ENCODE measurements at regions of chr17 and their contacts with region 1.

Region 1: GRCh38 chr17:48351831-48352332 is 78.1 kb downstream of the SKAP1 start:
- DNase-seq: no peak
- ATAC-seq: peak; percentile 27; the same call in 2 of the 3 replicates
- H3K4me3 ChIP-seq: no peak overlapping the region
- H3K27ac ChIP-seq: no peak overlapping the region
- H3K4me1 ChIP-seq: no peaks in the 10 kb centered on the region
- H3K27me3 ChIP-seq: no peaks in the 10 kb centered on the region
- CTCF ChIP-seq: peak; percentile 39 to 66 (median 53); a peak in 5 of 6 replicates
- EP300 ChIP-seq: no peak
- POLR2A ChIP-seq: no peak
- RAD21 ChIP-seq: peak; percentile 86

Region 2: GRCh38 chr17:48330386-48330785 is 21.5 kb before region 1 on chr17:
- CTCF ChIA-PET with region 1: interaction called, 67 read pairs
- POLR2A ChIA-PET with region 1: interaction called, 3 read pairs
- RAD21 ChIA-PET with region 1: interaction called, 35 read pairs
- SMC1A ChIA-PET with region 1: interaction called, 40 read pairs
- in situ Hi-C with region 1: no loop called
- intact Hi-C with region 1: no loop called
- DNase-seq: no peak
- ATAC-seq: no peak
- H3K4me3 ChIP-seq: no peak overlapping the region
- H3K27ac ChIP-seq: no peak overlapping the region
- H3K4me1 ChIP-seq: peaks cover 10% of the 10 kb centered on the region; the same call in 1 of the 2 replicates
- H3K27me3 ChIP-seq: no peaks in the 10 kb centered on the region
- CTCF ChIP-seq: no peak
- EP300 ChIP-seq: no peak
- POLR2A ChIP-seq: no peak
- RAD21 ChIP-seq: no peak

Region 3: GRCh38 chr17:48368352-48368908 is 16.5 kb after region 1 on chr17:
- CTCF ChIA-PET with region 1: interaction called, 36 read pairs
- POLR2A ChIA-PET with region 1: interaction called, 3 read pairs
- RAD21 ChIA-PET with region 1: interaction called, 5 read pairs
- SMC1A ChIA-PET with region 1: interaction called, 18 read pairs
- in situ Hi-C with region 1: no loop called
- intact Hi-C with region 1: no loop called
- DNase-seq: no peak
- ATAC-seq: no peak
- H3K4me3 ChIP-seq: no peak overlapping the region
- H3K27ac ChIP-seq: no peak overlapping the region
- H3K4me1 ChIP-seq: no peaks in the 10 kb centered on the region
- H3K27me3 ChIP-seq: no peaks in the 10 kb centered on the region
- CTCF ChIP-seq: no peak
- EP300 ChIP-seq: no peak
- POLR2A ChIP-seq: no peak
- RAD21 ChIP-seq: no peak

Region 4: DNA sequence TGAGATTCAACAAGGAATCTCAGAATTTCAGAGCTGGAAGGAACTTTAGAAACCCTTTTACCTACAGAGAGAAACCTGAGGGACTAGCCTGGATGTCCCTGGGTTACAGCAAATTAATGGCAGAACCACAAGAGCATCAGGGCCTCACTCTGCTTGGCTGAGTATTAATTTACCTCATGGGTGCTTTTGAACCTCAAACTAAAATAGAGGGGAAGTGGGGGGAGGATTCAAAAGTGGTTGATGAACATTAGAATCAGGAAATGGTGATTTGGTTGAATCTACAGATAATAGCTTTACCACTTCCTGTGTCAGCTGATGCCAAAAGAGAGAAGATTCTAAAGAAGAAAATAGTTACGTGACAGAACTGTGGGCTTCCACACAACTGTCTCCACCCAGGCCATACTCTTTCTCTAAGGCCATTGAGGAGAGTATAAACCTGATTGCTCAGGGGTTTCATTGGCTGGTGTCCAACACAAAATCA is 89.4 kb after region 1 on chr17:
- CTCF ChIA-PET with region 1: interaction called, 22 read pairs
- POLR2A ChIA-PET with region 1: no interaction called
- RAD21 ChIA-PET with region 1: interaction called, 28 read pairs
- SMC1A ChIA-PET with region 1: interaction called, 24 read pairs
- in situ Hi-C with region 1: no loop called
- intact Hi-C with region 1: no loop called
- DNase-seq: peak; percentile 96
- ATAC-seq: peak; percentile 86
- H3K4me3 ChIP-seq: peak overlapping the region; percentile 25; the same call in 1 of the 2 replicates
- H3K27ac ChIP-seq: peak overlapping the region; percentile 94
- H3K4me1 ChIP-seq: peaks cover 64% of the 10 kb centered on the region
- H3K27me3 ChIP-seq: no peaks in the 10 kb centered on the region
- CTCF ChIP-seq: no peak
- EP300 ChIP-seq: peak; percentile 85 to 91
- POLR2A ChIP-seq: no peak; the same call in 1 of the 2 replicates
- RAD21 ChIP-seq: 0 out of 2 replicates have a peak, but pooled peaks have one; percentile 1

Region 5: DNA sequence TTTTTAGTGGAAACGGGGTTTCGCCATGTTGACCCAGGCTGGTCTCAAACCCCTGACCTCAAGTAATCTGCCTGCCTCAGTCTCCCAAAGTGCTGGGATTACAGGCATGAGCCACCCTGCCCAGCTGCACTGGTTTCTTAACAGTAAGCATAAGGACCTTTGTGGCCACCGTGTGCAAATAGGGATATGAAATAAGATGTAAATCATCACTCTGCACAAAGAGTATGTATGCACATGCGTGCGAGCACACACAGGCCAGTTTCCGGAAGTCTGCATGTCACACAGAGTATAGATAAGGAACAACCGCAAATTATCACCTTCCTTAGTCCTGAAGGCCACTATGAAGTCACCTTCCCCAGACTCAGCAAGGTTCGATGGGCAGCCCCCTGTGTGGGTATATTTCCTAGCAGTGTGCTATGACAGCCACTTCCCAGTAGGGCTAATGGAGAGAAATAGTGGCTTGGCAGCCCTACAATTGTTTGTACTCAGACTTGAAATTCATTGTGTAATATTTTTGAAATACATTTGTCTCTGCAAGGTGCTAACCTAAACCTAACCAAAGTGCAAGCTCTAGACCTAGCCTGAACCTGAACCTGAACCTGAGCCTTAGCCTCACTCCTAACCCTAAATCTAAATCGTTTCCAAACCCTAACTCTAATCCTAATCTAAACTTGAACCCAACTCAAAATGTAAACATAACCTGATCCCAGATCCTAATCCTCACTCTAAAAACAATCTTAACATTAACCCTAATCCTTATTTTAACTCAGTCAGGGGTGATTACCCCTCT is 126.5 kb after region 1 on chr17:
- CTCF ChIA-PET with region 1: interaction called, 13 read pairs
- POLR2A ChIA-PET with region 1: no interaction called
- RAD21 ChIA-PET with region 1: interaction called, 4 read pairs
- SMC1A ChIA-PET with region 1: interaction called, 24 read pairs
- in situ Hi-C with region 1: no loop called
- intact Hi-C with region 1: no loop called
- DNase-seq: peak; percentile 84
- ATAC-seq: peak; percentile 98
- H3K4me3 ChIP-seq: no peak overlapping the region
- H3K27ac ChIP-seq: peak overlapping the region; percentile 51
- H3K4me1 ChIP-seq: peaks cover 20% of the 10 kb centered on the region
- H3K27me3 ChIP-seq: no peaks in the 10 kb centered on the region
- CTCF ChIP-seq: peak in 2 of 3 experiments; percentile 19 to 43; a peak in 1 of 6 replicates
- EP300 ChIP-seq: peak; percentile 88 to 91; a peak in 3 of 4 replicates
- POLR2A ChIP-seq: no peak
- RAD21 ChIP-seq: no peak

Region 6: DNA sequence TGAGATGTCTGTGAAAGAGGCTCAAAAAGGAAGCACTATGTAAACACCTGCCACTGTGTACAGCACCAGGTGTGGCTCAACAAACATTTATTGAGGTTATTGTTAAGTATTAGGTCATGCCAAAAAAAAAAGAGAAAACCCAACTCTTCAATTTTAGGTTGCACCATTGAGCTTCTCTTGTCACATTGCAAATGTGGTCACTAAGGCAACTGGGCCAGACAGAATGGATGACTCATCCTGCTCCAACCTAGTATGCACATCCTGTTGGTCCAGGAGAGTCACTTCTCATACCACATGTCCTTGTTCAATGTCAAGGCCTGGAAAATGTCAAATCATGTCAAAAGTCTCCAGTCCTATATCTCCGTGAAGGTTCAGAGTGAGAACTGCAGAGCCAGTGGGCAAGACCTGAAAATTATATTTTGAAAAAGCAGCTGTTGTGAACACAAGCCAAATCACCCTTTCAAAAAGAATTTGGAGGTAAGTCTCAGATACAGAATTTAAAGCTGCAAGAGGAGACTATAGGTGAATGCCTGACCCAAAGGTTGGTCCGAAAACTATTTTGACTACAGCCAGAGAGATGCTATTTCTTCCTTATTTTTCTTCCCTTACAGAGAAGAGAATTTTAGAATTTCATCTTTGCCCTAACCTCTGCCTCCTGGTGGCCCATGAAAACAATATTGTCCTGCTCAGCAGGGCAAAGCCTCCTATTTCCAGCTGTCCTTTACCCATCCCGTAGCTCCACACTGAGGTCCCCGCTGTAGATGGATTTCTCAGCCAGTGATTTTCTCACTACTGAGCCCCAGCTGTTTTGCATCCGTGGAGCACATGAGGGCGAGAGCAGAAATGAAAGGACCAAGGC is 154.1 kb after region 1 on chr17:
- CTCF ChIA-PET with region 1: interaction called, 12 read pairs
- POLR2A ChIA-PET with region 1: no interaction called
- RAD21 ChIA-PET with region 1: interaction called, 4 read pairs
- SMC1A ChIA-PET with region 1: interaction called, 7 read pairs
- in situ Hi-C with region 1: no loop called
- intact Hi-C with region 1: no loop called
- DNase-seq: peak; percentile 77
- ATAC-seq: peak; percentile 99
- H3K4me3 ChIP-seq: no peak overlapping the region
- H3K27ac ChIP-seq: no peak overlapping the region
- H3K4me1 ChIP-seq: peaks cover 26% of the 10 kb centered on the region
- H3K27me3 ChIP-seq: no peaks in the 10 kb centered on the region
- CTCF ChIP-seq: peak in 2 of 3 experiments; percentile 15 to 17; a peak in 1 of 6 replicates
- EP300 ChIP-seq: peak; percentile 49 to 82; a peak in 3 of 4 replicates
- POLR2A ChIP-seq: no peak
- RAD21 ChIP-seq: no peak

Region 7: GRCh38 chr17:48593840-48594537 is 242.1 kb after region 1 on chr17:
- CTCF ChIA-PET with region 1: interaction called, 47 read pairs
- POLR2A ChIA-PET with region 1: interaction called, 6 read pairs
- RAD21 ChIA-PET with region 1: interaction called, 35 read pairs
- SMC1A ChIA-PET with region 1: interaction called, 39 read pairs
- in situ Hi-C with region 1: no loop called
- intact Hi-C with region 1: no loop called
- DNase-seq: no peak
- ATAC-seq: peak; percentile 75
- H3K4me3 ChIP-seq: no peak overlapping the region; the same call in 1 of the 2 replicates
- H3K27ac ChIP-seq: no peak overlapping the region
- H3K4me1 ChIP-seq: peaks cover 10% of the 10 kb centered on the region
- H3K27me3 ChIP-seq: peaks cover 5 to 33% of the 10 kb centered on the region in 2 experiments
- CTCF ChIP-seq: peak; percentile 91 to 97 (median 94)
- EP300 ChIP-seq: no peak
- POLR2A ChIP-seq: no peak
- RAD21 ChIP-seq: peak; percentile 80